ENCODE measurements at regions of chr7 and their contacts with region 1.

Region 1: DNA sequence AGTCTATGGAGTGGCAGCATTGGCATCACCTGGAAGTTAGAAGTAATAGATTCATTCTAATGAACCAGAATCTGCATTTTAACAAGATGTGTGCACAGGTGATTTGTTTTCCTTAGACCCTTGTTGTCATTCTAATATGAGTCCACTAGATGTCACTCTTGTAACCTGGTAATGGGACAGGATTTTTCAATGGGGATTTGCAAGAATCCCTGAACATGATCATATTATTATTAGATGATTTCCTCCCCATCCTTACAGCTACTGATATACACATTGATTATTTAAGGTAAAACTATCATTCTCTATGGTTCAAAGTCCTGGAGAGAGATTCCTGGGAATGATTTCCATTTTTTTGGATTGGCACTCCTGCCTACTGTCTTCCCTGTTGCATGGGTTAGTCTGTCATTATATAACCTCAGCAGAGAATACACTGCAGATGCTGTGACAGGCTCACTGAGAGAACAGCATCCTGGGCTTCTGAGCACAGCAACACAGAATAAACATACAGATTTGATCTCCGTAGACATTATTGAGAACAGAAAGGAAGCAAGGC is 194.9 kb downstream of the SUGCT start:
- DNase-seq: no peak
- ATAC-seq: no peak
- H3K4me3 Mint-ChIP-seq: no peak overlapping the region
- H3K27ac Mint-ChIP-seq: no peak overlapping the region
- H3K4me1 Mint-ChIP-seq: no peaks in the 10 kb centered on the region
- H3K27me3 Mint-ChIP-seq: no peaks in the 10 kb centered on the region
- CTCF ChIP-seq: peak; percentile 79

Region 2: GRCh38 chr7:40120020-40120419 is 209.7 kb before region 1 on chr7:
- CTCF ChIA-PET with region 1: no interaction called
- POLR2A ChIA-PET with region 1: no interaction called
- intact Hi-C with region 1: no loop called
- DNase-seq: no peak
- ATAC-seq: no peak
- H3K4me3 Mint-ChIP-seq: no peak overlapping the region
- H3K27ac Mint-ChIP-seq: no peak overlapping the region
- H3K4me1 Mint-ChIP-seq: no peaks in the 10 kb centered on the region
- H3K27me3 Mint-ChIP-seq: no peaks in the 10 kb centered on the region
- CTCF ChIP-seq: no peak

Region 3: GRCh38 chr7:40232242-40232893 is 97.3 kb before region 1 on chr7:
- CTCF ChIA-PET with region 1: interaction called, 10 read pairs
- POLR2A ChIA-PET with region 1: no interaction called
- intact Hi-C with region 1: no loop called
- DNase-seq: peak; percentile 37
- ATAC-seq: no peak
- H3K4me3 Mint-ChIP-seq: no peak overlapping the region
- H3K27ac Mint-ChIP-seq: no peak overlapping the region
- H3K4me1 Mint-ChIP-seq: peaks cover 8% of the 10 kb centered on the region
- H3K27me3 Mint-ChIP-seq: no peaks in the 10 kb centered on the region
- CTCF ChIP-seq: peak; percentile 65

Region 4: GRCh38 chr7:40604601-40605438 is 275.1 kb after region 1 on chr7:
- CTCF ChIA-PET with region 1: interaction called, 10 read pairs
- POLR2A ChIA-PET with region 1: no interaction called
- intact Hi-C with region 1: loop called (anchors 2 kb)
- DNase-seq: peak; percentile 44
- ATAC-seq: peak; percentile 49
- H3K4me3 Mint-ChIP-seq: no peak overlapping the region
- H3K27ac Mint-ChIP-seq: no peak overlapping the region
- H3K4me1 Mint-ChIP-seq: peaks cover 3% of the 10 kb centered on the region
- H3K27me3 Mint-ChIP-seq: peaks cover 10% of the 10 kb centered on the region
- CTCF ChIP-seq: peak; percentile 70

Region 5: DNA sequence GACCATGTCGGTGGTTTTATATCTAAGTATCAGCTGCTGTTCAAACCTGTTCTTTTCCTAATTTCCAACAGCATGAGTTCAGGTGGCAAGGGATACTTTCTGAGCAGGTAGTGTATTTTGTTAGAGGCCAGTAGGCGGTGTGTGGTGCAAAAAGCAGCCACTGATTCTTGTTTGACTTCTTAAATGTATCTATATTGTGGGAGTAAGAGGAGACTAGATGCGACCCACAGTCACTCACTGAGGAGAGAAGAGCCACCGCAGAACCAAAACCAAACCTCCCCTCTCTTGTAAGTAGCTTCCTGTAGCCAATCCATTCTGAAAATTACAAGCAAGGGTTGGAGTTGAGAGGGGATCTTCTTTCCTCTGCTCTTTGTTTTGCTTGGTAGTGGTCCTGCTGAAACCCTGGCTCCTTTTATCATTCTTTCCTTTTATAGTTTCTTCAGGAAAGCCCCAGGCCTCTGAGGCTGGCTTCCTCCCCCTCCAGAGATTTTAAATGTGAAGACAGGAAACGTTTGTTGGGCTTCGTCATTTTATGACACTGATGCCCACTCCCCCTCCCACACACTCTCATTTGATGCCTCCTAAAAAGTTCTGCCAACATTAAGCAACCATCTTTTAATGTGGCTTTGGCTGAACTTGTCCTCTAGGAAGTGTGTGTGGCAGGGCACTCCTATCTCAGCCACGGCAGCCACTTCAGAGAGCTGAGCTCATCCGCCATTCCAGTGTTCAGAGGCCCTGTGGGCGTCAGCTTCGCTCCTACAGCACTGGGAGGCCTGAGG is 371.2 kb after region 1 on chr7:
- CTCF ChIA-PET with region 1: interaction called, 3 read pairs
- POLR2A ChIA-PET with region 1: no interaction called
- intact Hi-C with region 1: loop called (anchors 10 kb)
- DNase-seq: peak; percentile 73
- ATAC-seq: peak; percentile 87
- H3K4me3 Mint-ChIP-seq: peak overlapping the region; percentile 13
- H3K27ac Mint-ChIP-seq: peak overlapping the region; percentile 88
- H3K4me1 Mint-ChIP-seq: peaks cover 30% of the 10 kb centered on the region
- H3K27me3 Mint-ChIP-seq: no peaks in the 10 kb centered on the region
- CTCF ChIP-seq: peak; percentile 16